ENCODE measurements at regions of chr11 and their contacts with region 1.

Region 1: GRCh38 chr11:65027213-65028067 is at the start of gene SNX15:
- DNase-seq: peak; percentile 94 to 95 (median 95)
- ATAC-seq: peak; percentile 96 to 99 (median 98)
- H3K4me3 ChIP-seq: peak within 1 kb of the TSS; percentile 18 to 74 (median 69)
- H3K27ac ChIP-seq: peak within 1 kb of the TSS; percentile 53 to 96 (median 92)
- H3K4me1 ChIP-seq: peaks cover 0 to 18% (median 10%) of the 10 kb centered on the region in 12 donors
- H3K27me3 ChIP-seq: no peaks in the 10 kb centered on the region
- CTCF ChIP-seq: peak; percentile 70 to 92 (median 86)
- POLR2A ChIP-seq: peak in 1 of 2 donors; percentile 82
- total RNA-seq, gene SNX15: 12.7 to 33.0 (median 17.9) TPM

Region 2: DNA sequence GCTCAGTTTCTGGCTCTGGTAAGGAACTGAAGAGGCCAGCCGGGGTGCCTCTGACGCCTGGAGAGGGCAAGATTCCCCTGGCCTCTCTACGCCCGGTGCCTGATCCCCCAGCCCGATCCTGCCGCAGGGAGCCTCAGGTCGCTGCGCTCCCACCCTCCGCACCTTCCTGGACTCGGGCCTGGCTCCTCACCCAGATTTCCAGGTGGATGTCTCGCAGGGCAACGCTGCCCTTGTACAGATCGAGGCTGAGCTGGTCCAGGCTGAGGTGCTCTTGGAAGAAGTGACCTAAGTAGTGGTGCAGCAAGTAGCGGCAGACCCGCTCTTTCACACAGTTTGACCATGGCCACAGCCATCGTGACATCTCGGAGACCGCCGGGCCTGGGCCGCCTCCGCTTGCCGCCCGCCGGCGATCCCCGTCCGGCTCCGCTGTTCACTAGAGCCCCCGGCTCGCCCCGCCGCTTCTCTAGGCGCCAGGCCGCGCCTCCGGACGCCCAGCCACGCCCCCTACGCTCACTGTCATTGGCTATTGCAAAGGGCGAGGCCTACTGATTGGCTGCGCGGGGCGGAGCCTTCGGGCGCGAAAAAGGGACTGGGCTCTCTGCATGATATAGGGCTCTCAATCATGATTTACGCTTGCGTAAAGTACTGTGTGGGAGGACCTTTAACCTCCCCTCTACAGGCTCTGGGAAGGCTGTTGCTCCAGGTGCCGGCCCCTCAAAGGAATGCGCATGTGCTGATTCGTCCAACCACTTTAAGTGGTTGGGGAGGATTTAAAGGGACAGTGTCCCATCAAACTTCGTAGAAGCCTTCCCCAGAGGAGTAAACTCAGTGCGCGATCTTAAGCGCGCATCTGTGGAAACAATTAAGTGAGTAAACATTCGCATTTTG is 110.4 kb before region 1 on chr11 and contains the start of gene ATG2A:
- intact Hi-C with region 1: loop called in 4 of 10 experiments (anchors 1 to 5 kb)
- DNase-seq: peak; percentile 99 to 100 (median 99)
- ATAC-seq: peak; percentile 98 to 99 (median 98)
- H3K4me3 ChIP-seq: peak within 1 kb of the TSS; percentile 67 to 100 (median 97)
- H3K27ac ChIP-seq: peak within 1 kb of the TSS in 11 of 12 donors; percentile 78 to 95 (median 85)
- H3K4me1 ChIP-seq: peaks cover 0 to 42% (median 26%) of the 10 kb centered on the region in 12 donors
- H3K27me3 ChIP-seq: no peaks in the 10 kb centered on the region
- CTCF ChIP-seq: no peak
- POLR2A ChIP-seq: peak; percentile 79 to 96
- total RNA-seq, gene ATG2A: 11.4 to 38.5 (median 18.4) TPM

Region 3: GRCh38 chr11:64971421-64972233 is 55.8 kb before region 1 on chr11 and contains the start of gene MAJIN:
- intact Hi-C with region 1: no loop called
- DNase-seq: peak; percentile 88 to 97 (median 89)
- ATAC-seq: peak; percentile 55 to 95 (median 85)
- H3K4me3 ChIP-seq: peak within 1 kb of the TSS in 11 of 12 donors; percentile 12 to 50 (median 45)
- H3K27ac ChIP-seq: peak within 1 kb of the TSS in 10 of 12 donors; percentile 6 to 61 (median 48)
- H3K4me1 ChIP-seq: peaks cover 0 to 12% (median 10%) of the 10 kb centered on the region in 12 donors
- H3K27me3 ChIP-seq: peaks cover 0 to 3% (median 0%) of the 10 kb centered on the region in 9 donors
- CTCF ChIP-seq: no peak
- POLR2A ChIP-seq: peak in 1 of 2 donors; percentile 61
- total RNA-seq, gene MAJIN: not detected

Region 4: GRCh38 chr11:65083834-65084597 is 56.6 kb after region 1 on chr11 and contains the starts of genes CDCA5 and ZFPL1:
- intact Hi-C with region 1: loop called in 1 of 10 experiments (anchors 5 kb)
- DNase-seq: peak; percentile 95 to 96 (median 95)
- ATAC-seq: peak; percentile 90 to 98 (median 97)
- H3K4me3 ChIP-seq: peak within 1 kb of the TSS; percentile 44 to 93 (median 79)
- H3K27ac ChIP-seq: peak within 1 kb of the TSS; percentile 45 to 95 (median 90)
- H3K4me1 ChIP-seq: peaks cover 4 to 27% (median 16%) of the 10 kb centered on the region in 12 donors
- H3K27me3 ChIP-seq: no peaks in the 10 kb centered on the region
- CTCF ChIP-seq: no peak
- POLR2A ChIP-seq: peak in 1 of 2 donors; percentile 58
- total RNA-seq, gene CDCA5: 0.42 to 11.6 (median 0.81) TPM
- total RNA-seq, gene ZFPL1: 19.6 to 42.8 (median 25.0) TPM

Region 5: GRCh38 chr11:65095974-65096806 is 68.8 kb after region 1 on chr11 and contains the start of gene VPS51:
- intact Hi-C with region 1: loop called in 1 of 10 experiments (anchors 1 kb)
- DNase-seq: peak; percentile 88 to 92 (median 90)
- ATAC-seq: peak; percentile 92 to 96 (median 95)
- H3K4me3 ChIP-seq: peak within 1 kb of the TSS; percentile 59 to 91 (median 85)
- H3K27ac ChIP-seq: peak within 1 kb of the TSS; percentile 52 to 96 (median 92)
- H3K4me1 ChIP-seq: peaks cover 0 to 25% (median 15%) of the 10 kb centered on the region in 12 donors
- H3K27me3 ChIP-seq: no peaks in the 10 kb centered on the region
- CTCF ChIP-seq: no peak
- POLR2A ChIP-seq: peak in 1 of 2 donors; percentile 47
- total RNA-seq, gene VPS51: 78.4 to 165 (median 106) TPM

Measured in heart left ventricle (tissue), 16 donors.